Activated CD4-positive, alpha-beta memory T cell treated with anti-CD3 and anti-CD28 coated beads, Interleukin-2, amount 10 ng/mL, durations not matched to agents 7 days and 5 days (primary cell): ENCODE measurements at regions of chr17 and their contacts with region 1.

Region 1: DNA sequence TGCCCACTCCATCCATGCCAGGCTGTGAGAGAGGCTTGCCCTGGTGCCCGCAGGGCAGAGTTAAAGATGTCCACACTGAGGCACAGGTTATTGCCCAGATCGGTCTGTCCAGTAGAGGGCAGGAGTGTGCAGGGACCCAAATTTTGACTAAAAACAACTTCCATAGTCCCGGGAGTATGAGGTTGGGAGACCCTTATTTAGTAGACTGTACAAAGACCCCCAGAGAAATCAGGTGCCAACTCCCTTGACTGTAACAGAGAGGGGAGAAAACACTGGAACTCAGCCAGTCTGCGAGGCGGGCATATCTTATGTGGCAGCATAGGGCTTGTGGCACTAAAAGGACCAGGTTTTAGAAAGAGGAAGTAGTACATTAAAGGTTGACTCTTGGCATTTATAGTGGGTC is 43.4 kb downstream of the HNF1B start:
- DNase-seq: peak; percentile 63
- H3K4me3 Mint-ChIP-seq: no peak overlapping the region
- H3K27ac Mint-ChIP-seq: no peak overlapping the region
- H3K4me1 Mint-ChIP-seq: peaks cover 20% of the 10 kb centered on the region
- H3K27me3 Mint-ChIP-seq: peaks cover 48% of the 10 kb centered on the region

Region 2: DNA sequence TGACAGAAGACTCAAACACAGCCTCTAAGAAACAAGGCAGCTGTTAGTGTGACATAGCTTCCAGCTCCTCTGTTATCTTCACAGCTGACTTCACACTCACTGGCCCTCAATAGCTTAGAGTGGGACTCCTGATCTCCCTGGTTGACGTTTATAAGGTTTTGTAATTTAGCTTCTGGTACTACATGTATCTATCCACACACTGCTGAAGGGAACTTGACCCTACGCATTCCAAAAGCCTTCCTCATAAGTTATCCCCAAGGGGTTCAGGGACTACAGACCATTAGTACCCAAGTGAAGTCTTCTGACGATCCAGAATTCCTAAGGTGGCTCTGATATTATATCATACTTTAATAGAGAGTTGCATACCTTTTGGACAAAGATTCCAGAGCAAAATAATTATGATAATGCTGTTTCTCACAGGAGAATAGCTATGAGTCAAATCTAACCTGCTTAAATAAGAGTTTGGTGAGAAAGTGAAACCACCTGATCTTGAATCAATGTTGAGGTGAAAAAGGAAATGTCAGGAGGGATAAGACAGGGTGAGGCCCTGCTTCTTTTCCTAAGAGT is 309.4 kb before region 1 on chr17:
- CTCF ChIA-PET with region 1: no interaction called
- POLR2A ChIA-PET with region 1: no interaction called
- DNase-seq: no peak
- H3K4me3 Mint-ChIP-seq: no peak overlapping the region
- H3K27ac Mint-ChIP-seq: peak overlapping the region; percentile 5
- H3K4me1 Mint-ChIP-seq: peaks cover 18% of the 10 kb centered on the region
- H3K27me3 Mint-ChIP-seq: no peaks in the 10 kb centered on the region

Region 3: GRCh38 chr17:37689317-37689716 is 12.2 kb before region 1 on chr17:
- CTCF ChIA-PET with region 1: no interaction called
- POLR2A ChIA-PET with region 1: no interaction called
- DNase-seq: no peak
- H3K4me3 Mint-ChIP-seq: no peak overlapping the region
- H3K27ac Mint-ChIP-seq: no peak overlapping the region
- H3K4me1 Mint-ChIP-seq: no peaks in the 10 kb centered on the region
- H3K27me3 Mint-ChIP-seq: peaks cover 2% of the 10 kb centered on the region

Region 4: DNA sequence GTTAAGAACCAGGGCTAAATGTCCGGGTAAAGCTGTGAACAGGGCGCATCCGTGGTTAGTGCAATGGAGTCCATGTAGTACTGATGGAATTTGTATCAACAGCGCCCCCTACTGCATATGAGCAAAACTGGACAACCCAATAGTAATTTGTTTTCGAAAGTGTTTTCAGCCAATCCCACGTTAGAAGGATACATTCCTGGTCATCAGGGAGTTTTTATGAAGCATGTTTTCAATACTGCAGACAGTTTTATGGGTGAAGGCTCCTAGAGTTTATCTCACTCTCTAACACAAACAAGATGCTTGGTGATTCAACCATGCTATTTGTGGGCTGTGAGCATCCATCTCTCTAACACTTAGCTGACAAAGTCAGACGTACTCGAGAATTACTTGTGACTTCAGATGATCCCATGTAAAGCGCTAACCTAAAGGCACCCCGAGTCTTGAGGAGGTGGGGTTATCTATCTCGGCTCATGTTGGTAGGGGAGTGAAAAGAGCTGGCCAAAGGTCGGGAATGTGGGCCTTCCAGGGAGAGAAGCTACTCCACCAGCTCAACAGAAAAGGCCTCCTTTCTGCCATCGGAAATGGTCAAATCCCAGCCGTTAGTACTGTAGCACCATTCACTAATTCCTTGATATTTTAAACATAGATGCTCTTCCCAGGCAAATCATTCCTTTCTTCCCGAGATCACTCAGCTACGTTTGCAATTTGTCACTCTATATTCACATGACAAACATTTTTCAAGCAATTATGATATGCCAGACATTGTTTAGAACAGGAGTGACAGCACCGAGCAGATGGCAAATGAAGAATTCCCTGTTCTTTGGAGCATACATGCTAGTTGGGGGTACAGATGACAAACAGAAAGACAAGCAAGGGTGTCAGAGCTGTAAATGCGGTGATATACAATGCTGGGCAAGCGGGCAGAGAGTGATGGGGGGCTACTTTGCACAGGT is 90.2 kb after region 1 on chr17:
- CTCF ChIA-PET with region 1: interaction called, 39 read pairs
- POLR2A ChIA-PET with region 1: interaction called, 3 read pairs
- DNase-seq: peak; percentile 70
- H3K4me3 Mint-ChIP-seq: no peak overlapping the region
- H3K27ac Mint-ChIP-seq: no peak overlapping the region
- H3K4me1 Mint-ChIP-seq: peaks cover 6% of the 10 kb centered on the region
- H3K27me3 Mint-ChIP-seq: peaks cover 42% of the 10 kb centered on the region